ENCODE measurements at regions of chr7 and their contacts with region 1.

Region 1: DNA sequence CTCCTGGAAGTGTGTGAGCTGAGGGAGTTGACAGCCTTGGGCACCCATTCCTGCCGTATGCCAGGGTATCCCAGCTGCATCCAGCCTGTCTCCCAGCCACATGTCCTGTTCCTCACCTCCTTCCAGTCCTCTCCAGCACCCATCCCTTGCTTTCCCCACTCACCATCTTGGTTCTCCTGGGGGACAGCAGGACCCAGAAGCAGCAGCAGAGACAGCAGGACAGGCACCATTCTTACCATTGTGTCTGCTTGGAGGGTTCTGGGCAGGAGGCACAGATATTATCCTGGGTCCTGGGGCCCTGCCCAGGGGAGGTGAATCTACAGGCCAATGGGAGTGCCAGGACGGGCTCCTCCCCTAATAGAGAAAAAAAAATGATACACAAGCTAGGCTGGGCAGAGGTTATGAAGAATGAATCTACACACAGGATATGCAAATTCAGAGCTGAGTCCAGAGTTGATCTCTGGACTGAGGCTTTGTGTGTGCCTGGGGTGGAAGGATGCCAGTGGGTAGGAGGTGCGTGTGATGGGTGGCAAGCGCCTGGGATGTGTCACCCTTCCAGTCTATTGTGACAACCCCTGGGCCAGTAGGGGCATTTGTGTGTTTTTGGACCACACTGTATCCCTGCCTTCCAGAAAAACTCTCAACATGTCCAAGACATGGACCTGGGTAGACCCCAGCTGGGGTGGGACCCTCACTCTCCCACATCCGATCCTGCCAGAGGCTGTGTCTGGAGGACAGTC is at the start of gene AZGP1:
- DNase-seq: no peak
- ATAC-seq: no peak
- H3K4me3 ChIP-seq: no peak within 1 kb of the TSS
- H3K27ac ChIP-seq: no peak within 1 kb of the TSS
- H3K4me1 ChIP-seq: no peaks in the 10 kb centered on the region
- H3K27me3 ChIP-seq: no peaks in the 10 kb centered on the region
- CTCF ChIP-seq: no peak
- polyA plus RNA-seq, gene AZGP1: 0.29 to 110 (median 0.94) TPM

Region 2: GRCh38 chr7:99472561-99473243 is 503.2 kb before region 1 on chr7 and contains the start of gene ZNF789:
- intact Hi-C with region 1: no loop called
- DNase-seq: peak; percentile 92 to 99 (median 98)
- ATAC-seq: peak; percentile 99
- H3K4me3 ChIP-seq: peak within 1 kb of the TSS; percentile 83 to 93
- H3K27ac ChIP-seq: peak within 1 kb of the TSS; percentile 84 to 91
- H3K4me1 ChIP-seq: peaks cover 7 to 21% of the 10 kb centered on the region in 2 donors
- H3K27me3 ChIP-seq: no peaks in the 10 kb centered on the region
- CTCF ChIP-seq: peak in 1 of 2 donors; percentile 8
- polyA plus RNA-seq, gene ZNF789: 47.4 to 59.5 (median 53.9) TPM

Region 3: DNA sequence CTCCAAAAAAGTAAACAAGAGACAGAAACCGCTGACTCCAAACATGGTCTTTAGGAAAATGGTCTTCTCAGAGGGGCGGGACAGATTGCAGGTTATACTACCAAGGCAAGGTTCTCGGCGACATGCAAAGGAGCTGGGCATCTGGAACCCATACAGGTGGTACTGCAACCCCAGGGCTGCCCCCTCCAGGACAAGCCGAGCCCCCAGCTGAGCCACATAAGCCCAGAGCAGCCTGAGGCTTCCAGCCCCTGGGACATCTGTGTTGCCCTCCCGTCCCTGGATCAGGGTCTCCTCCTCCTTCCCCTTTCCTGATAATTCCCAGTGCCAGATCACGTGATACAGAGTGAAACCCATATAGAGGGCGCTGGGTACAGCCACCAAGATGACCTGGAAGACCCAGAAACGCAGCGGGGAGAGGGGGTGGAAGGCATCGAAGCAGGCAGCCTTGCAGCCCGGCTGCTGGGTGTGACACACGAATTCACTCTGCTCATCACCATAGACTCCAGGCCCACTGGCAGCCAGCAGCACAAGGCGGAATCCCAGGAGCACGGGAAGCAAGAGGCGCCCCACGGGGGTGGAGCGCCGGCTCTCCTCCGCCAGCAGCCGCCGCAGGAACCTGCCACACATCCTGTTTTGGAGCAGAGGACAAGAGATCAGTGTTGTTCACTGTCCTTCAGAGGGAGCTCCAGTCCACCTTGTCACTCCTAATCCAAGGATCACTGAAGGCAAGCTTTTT is 46.8 kb before region 1 on chr7 and contains the start of gene GJC3:
- intact Hi-C with region 1: loop called in 1 of 2 experiments (anchors 10 kb)
- DNase-seq: peak in 3 of 4 donors; percentile 28 to 86 (median 53)
- ATAC-seq: peak; percentile 99
- H3K4me3 ChIP-seq: peak within 1 kb of the TSS in 1 of 2 donors; percentile 25
- H3K27ac ChIP-seq: peak within 1 kb of the TSS in 1 of 2 donors; percentile 25
- H3K4me1 ChIP-seq: peaks cover 0 to 8% of the 10 kb centered on the region in 2 donors
- H3K27me3 ChIP-seq: peaks cover 0 to 26% of the 10 kb centered on the region in 2 donors
- CTCF ChIP-seq: peak; percentile 13 to 18
- polyA plus RNA-seq, gene GJC3: 0.98 to 1.3 (median 1.1) TPM